ENCODE measurements at regions of chr6 and their contacts with region 1.

Region 1: GRCh38 chr6:82260997-82261686 is 13.6 kb upstream of the IBTK start:
- DNase-seq: no peak
- ATAC-seq: no peak

Region 2: GRCh38 chr6:82337647-82338257 is 76.6 kb after region 1 on chr6:
- intact Hi-C with region 1: no loop called
- DNase-seq: no peak
- ATAC-seq: no peak

Region 3: DNA sequence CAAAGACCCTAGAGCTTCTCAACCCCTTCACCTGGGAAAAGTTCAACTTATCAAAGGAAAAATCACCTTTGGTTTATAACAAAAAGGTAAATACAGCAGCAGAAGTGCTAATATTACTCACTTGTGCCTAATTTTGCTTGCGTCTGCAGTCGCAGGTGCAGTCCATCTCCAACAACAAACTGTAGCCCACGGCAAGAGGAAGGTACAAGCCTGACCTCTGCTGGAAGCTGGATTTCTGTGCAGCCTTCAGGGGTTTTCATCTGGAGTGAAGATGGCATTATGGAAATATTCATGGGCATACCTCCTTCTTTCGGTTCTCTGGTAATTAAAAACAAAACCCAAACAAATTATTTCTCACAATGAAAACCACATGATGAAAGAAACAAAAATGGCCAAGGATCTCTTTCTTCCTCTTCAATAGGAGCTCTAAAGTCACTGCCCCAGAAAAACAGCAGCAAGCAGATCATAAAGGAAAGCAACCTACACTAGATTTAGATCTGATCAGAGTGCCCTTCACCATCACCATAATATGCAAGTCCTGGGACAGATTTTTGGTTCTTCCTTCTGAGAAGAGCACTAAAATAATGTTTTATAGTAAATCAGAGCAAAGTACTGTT is 796.7 kb after region 1 on chr6:
- intact Hi-C with region 1: loop called (anchors 10 kb)
- DNase-seq: no peak
- ATAC-seq: peak; percentile 55

Measured in sciatic nerve (tissue), 2 donors.